Activated B cell treated with CpG ODN at 0.5 μM for 24 hours (primary cell): ENCODE measurements at regions of chr3 and their contacts with region 1.

Region 1: DNA sequence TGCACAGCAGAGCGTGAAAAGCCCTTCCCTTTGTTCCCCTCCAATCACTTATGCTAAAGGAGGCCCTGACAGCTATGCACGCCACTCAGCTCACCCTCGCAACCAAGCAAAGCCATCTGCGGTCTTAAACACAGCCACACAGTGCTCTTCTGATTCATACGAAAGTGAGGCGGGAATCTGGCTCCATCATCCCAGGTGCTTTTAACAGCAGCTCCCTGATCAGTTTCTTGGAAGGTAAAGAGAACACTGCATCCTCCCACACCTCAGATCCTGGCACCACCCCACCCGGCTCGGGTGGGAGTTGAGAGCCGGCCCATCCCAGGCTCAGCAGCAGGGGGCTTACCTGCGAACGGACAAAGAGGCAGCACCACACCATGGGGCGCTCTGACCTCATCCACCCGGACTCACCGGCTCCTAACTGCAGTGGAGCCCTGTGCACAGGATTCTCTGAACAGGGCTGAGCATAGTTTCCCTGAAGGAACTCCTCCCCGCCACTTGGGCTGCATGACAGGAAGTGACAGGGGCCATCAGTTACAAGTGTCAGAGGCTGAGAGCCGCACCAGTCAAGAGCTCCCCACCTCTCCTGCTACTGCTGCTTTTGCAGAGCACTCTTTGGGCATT is 114.3 kb upstream of the ARHGEF3 start:
- DNase-seq: peak; percentile 33
- ATAC-seq: peak; percentile 69
- H3K4me3 Mint-ChIP-seq: peak overlapping the region; percentile 84
- H3K27ac Mint-ChIP-seq: peak overlapping the region; percentile 95
- H3K4me1 Mint-ChIP-seq: peaks cover 61% of the 10 kb centered on the region
- H3K27me3 Mint-ChIP-seq: no peaks in the 10 kb centered on the region
- CTCF ChIP-seq: no peak

Region 2: GRCh38 chr3:56468184-56469106 is 447.6 kb before region 1 on chr3 and contains the start of gene ERC2:
- CTCF ChIA-PET with region 1: no interaction called
- POLR2A ChIA-PET with region 1: no interaction called
- intact Hi-C with region 1: no loop called
- DNase-seq: no peak
- ATAC-seq: no peak
- H3K4me3 Mint-ChIP-seq: peak within 1 kb of the TSS; percentile 60
- H3K27ac Mint-ChIP-seq: no peak within 1 kb of the TSS
- H3K4me1 Mint-ChIP-seq: peaks cover 4% of the 10 kb centered on the region
- H3K27me3 Mint-ChIP-seq: peaks cover 51% of the 10 kb centered on the region
- CTCF ChIP-seq: no peak
- total RNA-seq, gene ERC2: not detected in 2 replicates

Region 3: GRCh38 chr3:56702490-56703315 is 213.4 kb before region 1 on chr3:
- CTCF ChIA-PET with region 1: interaction called, 4 read pairs
- POLR2A ChIA-PET with region 1: interaction called, 3 read pairs
- intact Hi-C with region 1: loop called (anchors 2 kb)
- DNase-seq: no peak
- ATAC-seq: peak; percentile 71
- H3K4me3 Mint-ChIP-seq: no peak overlapping the region
- H3K27ac Mint-ChIP-seq: no peak overlapping the region
- H3K4me1 Mint-ChIP-seq: peaks cover 12% of the 10 kb centered on the region
- H3K27me3 Mint-ChIP-seq: no peaks in the 10 kb centered on the region
- CTCF ChIP-seq: peak; percentile 53

Region 4: GRCh38 chr3:56801662-56802377 is 114.3 kb before region 1 on chr3 and contains the start of gene ARHGEF3:
- CTCF ChIA-PET with region 1: interaction called, 7 read pairs
- POLR2A ChIA-PET with region 1: interaction called, 27 read pairs
- intact Hi-C with region 1: loop called (anchors 2 kb)
- DNase-seq: peak; percentile 84
- ATAC-seq: peak; percentile 91
- H3K4me3 Mint-ChIP-seq: peak within 1 kb of the TSS; percentile 95
- H3K27ac Mint-ChIP-seq: peak within 1 kb of the TSS; percentile 87
- H3K4me1 Mint-ChIP-seq: peaks cover 49% of the 10 kb centered on the region
- H3K27me3 Mint-ChIP-seq: no peaks in the 10 kb centered on the region
- CTCF ChIP-seq: peak; percentile 32
- total RNA-seq, gene ARHGEF3: 22.1 and 27.0 TPM in 2 replicates

Region 5: GRCh38 chr3:56960234-56960917 is 44.3 kb after region 1 on chr3:
- CTCF ChIA-PET with region 1: no interaction called
- POLR2A ChIA-PET with region 1: interaction called, 4 read pairs
- intact Hi-C with region 1: loop called (anchors 5 kb)
- DNase-seq: no peak
- ATAC-seq: peak; percentile 42
- H3K4me3 Mint-ChIP-seq: no peak overlapping the region
- H3K27ac Mint-ChIP-seq: no peak overlapping the region
- H3K4me1 Mint-ChIP-seq: peaks cover 12% of the 10 kb centered on the region
- H3K27me3 Mint-ChIP-seq: peaks cover 3% of the 10 kb centered on the region
- CTCF ChIP-seq: no peak

Region 6: GRCh38 chr3:56988458-56989168 is 72.5 kb after region 1 on chr3:
- CTCF ChIA-PET with region 1: interaction called, 3 read pairs
- POLR2A ChIA-PET with region 1: no interaction called
- intact Hi-C with region 1: loop called (anchors 2 kb)
- DNase-seq: peak; percentile 45
- ATAC-seq: peak; percentile 61
- H3K4me3 Mint-ChIP-seq: no peak overlapping the region
- H3K27ac Mint-ChIP-seq: no peak overlapping the region
- H3K4me1 Mint-ChIP-seq: peaks cover 3% of the 10 kb centered on the region
- H3K27me3 Mint-ChIP-seq: peaks cover 12% of the 10 kb centered on the region
- CTCF ChIP-seq: peak; percentile 82

Region 7: DNA sequence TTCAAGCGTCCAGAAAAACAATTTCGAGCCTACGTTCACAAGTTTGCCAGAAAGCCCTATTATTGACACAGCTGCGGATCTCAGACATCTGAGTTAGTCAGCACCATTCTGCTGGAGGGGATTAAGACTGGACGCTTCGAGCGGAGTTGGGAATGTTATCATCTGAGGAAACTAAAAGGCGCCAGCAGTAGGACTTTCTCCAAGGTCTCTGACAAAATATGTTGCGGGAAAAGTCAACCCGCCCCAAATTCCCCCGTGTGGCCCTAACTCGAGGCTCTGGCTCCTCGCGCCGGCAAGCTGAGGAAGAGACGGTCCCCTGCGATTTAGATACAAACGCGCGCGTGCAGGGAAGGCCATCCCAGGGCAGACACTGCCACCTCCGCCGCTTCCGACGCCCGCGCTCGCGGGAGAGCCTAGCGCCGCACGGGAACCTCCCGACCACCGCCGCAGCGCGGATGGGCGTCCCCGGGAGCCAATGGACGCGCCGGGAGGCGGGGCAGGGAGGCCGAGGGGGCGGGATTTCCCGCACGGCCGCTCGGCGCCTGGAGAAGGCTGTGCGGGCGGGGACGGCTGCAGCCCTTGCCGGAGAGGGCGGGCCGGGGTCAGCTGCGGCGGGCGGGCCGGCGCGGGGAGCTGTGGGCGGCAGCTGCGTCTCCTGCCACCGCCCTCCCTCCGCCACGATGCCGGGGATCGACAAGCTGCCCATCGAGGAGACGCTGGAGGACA is 311.3 kb after region 1 on chr3 and contains the start of gene APPL1:
- CTCF ChIA-PET with region 1: no interaction called
- POLR2A ChIA-PET with region 1: no interaction called
- intact Hi-C with region 1: loop called (anchors 5 kb)
- DNase-seq: peak; percentile 95
- ATAC-seq: peak; percentile 97
- H3K4me3 Mint-ChIP-seq: peak within 1 kb of the TSS; percentile 94
- H3K27ac Mint-ChIP-seq: peak within 1 kb of the TSS; percentile 87
- H3K4me1 Mint-ChIP-seq: peaks cover 45% of the 10 kb centered on the region
- H3K27me3 Mint-ChIP-seq: no peaks in the 10 kb centered on the region
- CTCF ChIP-seq: no peak
- total RNA-seq, gene APPL1: 58.3 and 62.0 TPM in 2 replicates

Region 8: GRCh38 chr3:58034738-58035523 is 1118.9 kb after region 1 on chr3:
- CTCF ChIA-PET with region 1: no interaction called
- POLR2A ChIA-PET with region 1: interaction called, 18 read pairs
- intact Hi-C with region 1: no loop called
- DNase-seq: no peak
- ATAC-seq: peak; percentile 92
- H3K4me3 Mint-ChIP-seq: peak overlapping the region; percentile 57
- H3K27ac Mint-ChIP-seq: peak overlapping the region; percentile 77
- H3K4me1 Mint-ChIP-seq: peaks cover 37% of the 10 kb centered on the region
- H3K27me3 Mint-ChIP-seq: no peaks in the 10 kb centered on the region
- CTCF ChIP-seq: no peak